Panc1 (cell line): ENCODE measurements at regions of chr11 and their contacts with region 1.

Region 1: DNA sequence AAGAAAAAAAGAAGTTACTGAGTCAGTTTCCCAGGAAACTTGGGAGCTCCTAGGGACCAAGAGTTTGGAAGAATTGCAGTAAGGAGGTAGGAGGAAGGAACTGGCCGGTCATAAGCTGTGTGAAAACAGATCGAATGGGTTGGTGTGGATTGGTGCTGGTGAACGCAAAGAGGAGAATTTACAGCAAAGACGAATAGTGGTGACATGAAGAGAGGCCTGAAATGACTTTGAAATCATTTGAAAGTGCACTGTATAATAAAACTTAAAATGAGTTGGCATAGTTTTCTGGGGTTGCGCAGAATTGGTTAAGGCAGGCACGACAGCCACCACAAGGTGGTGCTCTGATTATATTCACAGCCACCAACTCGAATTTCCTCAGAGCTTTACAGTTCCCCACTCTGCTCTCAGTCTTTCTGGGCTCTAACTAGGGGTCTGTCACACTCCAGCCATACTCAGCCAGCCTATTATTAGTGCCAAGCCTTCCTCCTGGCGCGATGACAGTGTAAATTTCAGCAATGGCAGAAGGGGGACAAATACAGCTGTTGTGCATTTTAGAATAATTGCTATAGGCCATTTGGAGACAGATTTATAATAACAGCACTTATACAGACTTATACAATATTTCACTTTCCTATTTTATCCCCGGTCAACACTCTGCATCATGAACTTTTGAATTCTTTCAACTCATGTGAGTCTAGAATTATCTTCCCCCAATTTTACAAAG is 8.3 kb upstream of the HTR3B start:
- DNase-seq: no peak
- ATAC-seq: peak; percentile 88
- H3K4me3 ChIP-seq: no peak overlapping the region
- H3K27ac ChIP-seq: no peak overlapping the region
- H3K4me1 ChIP-seq: no peaks in the 10 kb centered on the region
- H3K27me3 ChIP-seq: peaks cover 6% of the 10 kb centered on the region; the same call in 1 of the 2 replicates
- CTCF ChIP-seq: peak; percentile 94

Region 2: GRCh38 chr11:113994077-113994954 is 98.0 kb after region 1 on chr11:
- CTCF ChIA-PET with region 1: interaction called, 4 read pairs
- POLR2A ChIA-PET with region 1: no interaction called
- in situ Hi-C with region 1: no loop called
- intact Hi-C with region 1: loop called (anchors 5 kb)
- DNase-seq: no peak
- ATAC-seq: peak; percentile 75
- H3K4me3 ChIP-seq: no peak overlapping the region
- H3K27ac ChIP-seq: no peak overlapping the region
- H3K4me1 ChIP-seq: no peaks in the 10 kb centered on the region
- H3K27me3 ChIP-seq: peaks cover 2% of the 10 kb centered on the region; the same call in 1 of the 2 replicates
- CTCF ChIP-seq: peak; percentile 87

Region 3: GRCh38 chr11:115659061-115659963 is 1763.0 kb after region 1 on chr11:
- CTCF ChIA-PET with region 1: no interaction called
- POLR2A ChIA-PET with region 1: no interaction called
- in situ Hi-C with region 1: no loop called
- intact Hi-C with region 1: no loop called
- DNase-seq: no peak
- ATAC-seq: peak; percentile 44; the same call in 1 of the 2 replicates
- H3K4me3 ChIP-seq: peak overlapping the region; percentile 10 to 20
- H3K27ac ChIP-seq: no peak overlapping the region
- H3K4me1 ChIP-seq: no peaks in the 10 kb centered on the region
- H3K27me3 ChIP-seq: peaks cover 5% of the 10 kb centered on the region; the same call in 1 of the 2 replicates
- CTCF ChIP-seq: no peak